ENCODE measurements at regions of chr6 and their contacts with region 1.

Region 1: GRCh38 chr6:107820338-107821261 is 3.5 kb downstream of the SCML4 start:
- DNase-seq: peak; percentile 27
- H3K4me3 Mint-ChIP-seq: peak overlapping the region; percentile 83
- H3K27ac Mint-ChIP-seq: peak overlapping the region; percentile 97
- H3K4me1 Mint-ChIP-seq: peaks cover 88% of the 10 kb centered on the region
- H3K27me3 Mint-ChIP-seq: no peaks in the 10 kb centered on the region

Region 2: DNA sequence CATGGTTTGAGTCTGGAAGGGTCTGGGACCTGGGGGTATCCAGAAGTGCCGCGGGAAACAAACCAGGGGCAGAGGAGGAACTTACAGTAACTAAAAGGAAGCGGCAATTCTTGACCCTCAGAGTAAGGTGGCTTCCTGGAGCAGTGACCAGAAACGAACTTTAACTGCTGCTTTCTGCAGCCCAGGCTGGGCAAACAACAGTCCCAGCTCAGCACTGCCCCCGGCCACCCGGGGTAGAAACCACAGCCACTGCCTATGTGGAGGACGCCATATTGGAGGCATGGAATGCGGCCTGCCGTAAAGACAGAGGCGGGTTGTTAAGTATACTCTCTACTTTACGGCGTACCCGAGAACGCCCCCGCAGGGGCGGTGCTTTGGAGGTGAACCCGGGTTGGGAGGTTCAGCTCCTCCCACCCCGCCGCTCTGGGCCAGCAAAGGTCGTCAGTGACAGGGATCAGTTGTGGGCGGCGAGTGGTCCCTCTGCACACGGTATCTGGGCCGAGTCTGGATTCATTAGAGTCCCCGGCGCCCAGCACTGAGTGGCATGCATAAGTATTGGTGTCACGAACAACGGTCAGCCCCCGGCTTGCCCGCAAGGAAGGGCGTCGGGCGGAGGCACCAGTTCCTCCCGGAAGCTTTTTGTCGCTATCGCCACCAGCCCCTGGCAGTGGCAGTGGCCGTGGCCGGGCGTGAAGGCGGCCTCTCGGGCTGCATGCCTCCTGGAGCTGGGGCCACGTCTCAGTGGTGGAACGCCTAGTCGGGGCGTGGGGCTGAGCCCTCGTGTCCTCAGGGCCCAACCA is 361.1 kb before region 1 on chr6 and contains the start of gene PDSS2:
- intact Hi-C with region 1: loop called (anchors 1 kb)
- DNase-seq: peak; percentile 95
- H3K4me3 Mint-ChIP-seq: peak within 1 kb of the TSS; percentile 93
- H3K27ac Mint-ChIP-seq: peak within 1 kb of the TSS; percentile 91
- H3K4me1 Mint-ChIP-seq: peaks cover 16% of the 10 kb centered on the region
- H3K27me3 Mint-ChIP-seq: no peaks in the 10 kb centered on the region
- total RNA-seq, gene PDSS2: 11.8 and 14.5 TPM in 2 replicates

Region 3: DNA sequence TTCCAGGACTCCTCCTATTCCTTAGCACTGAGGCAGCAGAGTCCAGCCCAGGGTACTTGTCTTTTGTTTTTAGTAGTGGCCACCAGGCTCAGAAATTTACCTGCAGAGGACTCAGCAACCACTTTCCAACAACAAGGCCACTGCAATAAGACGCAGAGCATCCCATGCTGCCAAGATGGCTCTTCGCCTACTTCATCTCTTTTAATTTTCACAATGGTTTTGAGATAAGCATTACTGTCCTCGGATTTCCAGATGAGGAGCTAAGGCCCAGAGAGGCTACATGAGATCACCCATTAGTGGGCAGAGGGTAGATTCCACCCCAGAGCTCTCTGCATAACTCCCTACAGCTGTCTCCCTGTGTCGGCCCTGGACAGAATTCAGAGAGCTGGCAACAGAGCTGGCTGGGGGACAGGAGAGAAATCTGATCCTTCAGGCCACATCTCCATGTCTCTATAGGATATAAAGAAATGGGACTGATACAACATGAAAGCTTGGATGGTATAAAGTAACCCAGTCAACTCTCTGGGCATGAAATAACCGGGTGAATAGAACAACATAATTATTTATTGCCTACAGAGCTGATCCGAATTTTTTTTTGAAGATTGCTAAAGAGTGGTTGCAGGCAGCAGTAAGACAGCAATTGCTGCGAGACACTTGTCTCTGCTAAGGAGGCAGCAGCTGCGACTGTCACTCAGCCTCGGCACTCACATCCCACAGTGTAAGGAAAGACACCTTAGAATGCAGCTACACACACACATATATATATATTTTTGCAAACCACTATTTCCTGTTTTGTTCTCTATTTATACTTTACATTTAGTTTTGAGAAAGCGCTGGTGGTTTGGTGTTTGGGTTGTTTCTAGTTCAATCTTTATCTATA is 33.7 kb before region 1 on chr6:
- intact Hi-C with region 1: loop called (anchors 1 kb)
- DNase-seq: peak; percentile 40
- H3K4me3 Mint-ChIP-seq: peak overlapping the region; percentile 71
- H3K27ac Mint-ChIP-seq: no peak overlapping the region
- H3K4me1 Mint-ChIP-seq: peaks cover 57% of the 10 kb centered on the region
- H3K27me3 Mint-ChIP-seq: peaks cover 8% of the 10 kb centered on the region

Region 4: DNA sequence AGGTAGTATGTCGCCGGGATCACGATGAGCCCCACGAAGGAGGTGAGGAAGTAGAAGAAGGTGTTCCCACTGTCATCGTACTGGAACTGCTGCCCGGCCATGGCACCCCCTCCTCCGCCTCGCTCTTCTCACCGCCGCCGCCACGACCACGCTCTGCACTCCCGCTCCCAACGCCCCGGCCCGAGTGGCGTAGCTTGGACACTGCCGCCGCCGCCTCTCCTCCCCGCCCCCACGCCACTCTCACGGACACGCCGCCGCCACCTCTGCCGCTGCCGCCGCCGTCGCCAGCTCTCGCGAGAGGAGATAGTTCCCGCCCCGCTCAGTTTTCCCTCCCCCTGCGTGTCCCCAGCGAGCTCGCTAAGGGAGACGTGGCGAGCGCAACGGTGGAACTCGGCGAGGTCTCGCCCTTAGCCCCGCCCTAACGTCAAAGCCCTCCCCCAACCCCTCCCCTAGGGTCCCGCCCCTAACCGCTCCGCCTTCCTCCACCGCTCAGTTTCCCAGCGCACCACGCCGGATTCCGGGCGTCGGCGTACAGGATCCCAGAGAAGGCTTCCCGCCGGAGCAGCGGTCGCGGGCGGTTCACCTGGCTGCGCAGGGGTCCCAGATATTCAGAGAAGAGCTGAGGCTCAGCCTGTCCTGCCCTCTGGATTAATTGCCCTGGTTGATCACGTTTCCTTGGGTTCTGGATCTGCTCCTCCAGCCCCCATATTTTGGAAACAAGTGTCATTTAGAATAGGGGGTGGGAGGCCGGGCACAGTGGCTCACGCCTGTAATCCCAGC is 137.5 kb after region 1 on chr6 and contains the start of gene SEC63:
- intact Hi-C with region 1: loop called (anchors 1 kb)
- DNase-seq: peak; percentile 97
- H3K4me3 Mint-ChIP-seq: peak within 1 kb of the TSS; percentile 100
- H3K27ac Mint-ChIP-seq: peak within 1 kb of the TSS; percentile 99
- H3K4me1 Mint-ChIP-seq: peaks cover 14% of the 10 kb centered on the region
- H3K27me3 Mint-ChIP-seq: peaks cover 5% of the 10 kb centered on the region
- total RNA-seq, gene SEC63: 87.1 and 90.7 TPM in 2 replicates

Region 5: DNA sequence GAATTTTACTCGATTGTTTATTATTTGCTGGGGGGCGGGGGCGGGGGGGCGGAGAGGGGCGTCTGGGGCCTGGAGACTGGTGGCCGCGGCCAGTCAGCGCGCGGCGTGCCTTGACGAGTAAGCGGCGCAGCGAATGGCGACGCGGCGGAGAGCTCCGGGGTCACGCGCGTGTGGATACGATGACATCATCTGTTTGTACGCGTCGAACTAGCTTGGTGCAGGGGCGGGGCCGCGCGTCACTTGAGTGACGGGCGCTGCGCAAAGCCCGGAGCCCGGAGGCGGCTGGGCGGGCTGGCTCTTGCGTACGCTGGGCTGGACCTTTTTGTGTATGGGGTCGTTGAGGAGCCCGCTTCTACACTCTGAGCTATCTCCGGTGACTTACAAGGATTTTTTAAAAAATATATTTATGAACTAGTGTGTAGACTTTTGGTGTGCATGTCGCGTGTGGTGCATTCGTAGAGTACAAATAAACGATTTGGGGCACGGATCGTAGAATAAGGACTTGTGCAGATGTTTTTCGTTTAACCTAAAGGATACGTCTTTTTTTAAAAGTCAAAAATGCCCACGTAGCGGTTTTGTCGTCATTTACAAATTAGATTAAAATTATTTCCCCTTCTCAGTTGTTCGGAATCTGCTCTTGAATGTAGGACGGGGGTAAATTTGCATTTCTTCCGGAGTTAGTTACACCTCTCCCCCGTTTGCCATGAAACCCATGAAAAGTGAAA is 737.9 kb after region 1 on chr6:
- intact Hi-C with region 1: loop called (anchors 2 kb)
- DNase-seq: peak; percentile 95
- H3K4me3 Mint-ChIP-seq: peak overlapping the region; percentile 88
- H3K27ac Mint-ChIP-seq: peak overlapping the region; percentile 91
- H3K4me1 Mint-ChIP-seq: peaks cover 32% of the 10 kb centered on the region
- H3K27me3 Mint-ChIP-seq: peaks cover 47% of the 10 kb centered on the region

Measured in activated T-helper 1 cell treated with anti-CD3 and anti-CD28 coated beads, Interleukin-12 subunit alpha, Interleukin-12 subunit beta, Interleukin-2, Interleukin-4 antibody, amounts not matched to agents 30 ng/mL and 10 ng/mL and 1 ng/mL, durations not matched to agents 14 hours and 24 hours and 36 hours (primary cell).